K562 (cell line): ENCODE measurements at regions of chr22 and their contacts with region 1.

Region 1: GRCh38 chr22:22527312-22527711 is 7.2 kb upstream of the ZNF280A start:
- DNase-seq: peak in 1 of 4 experiments; percentile 83
- ATAC-seq: peak; percentile 9
- H3K4me3 ChIP-seq: no peak overlapping the region
- H3K27ac ChIP-seq: no peak overlapping the region
- H3K4me1 ChIP-seq: peaks cover 0 to 2% of the 10 kb centered on the region in 2 experiments; a peak in 1 of 5 replicates
- H3K27me3 ChIP-seq: no peaks in the 10 kb centered on the region
- CTCF ChIP-seq: no peak
- EP300 ChIP-seq: no peak
- POLR2A ChIP-seq: no peak
- RAD21 ChIP-seq: no peak

Region 2: GRCh38 chr22:22546490-22546889 is 19.2 kb after region 1 on chr22:
- CTCF ChIA-PET with region 1: no interaction called
- POLR2A ChIA-PET with region 1: interaction called, 708 read pairs
- in situ Hi-C with region 1: no loop called
- intact Hi-C with region 1: no loop called
- DNase-seq: peak; percentile 56 to 72 (median 68)
- ATAC-seq: peak; percentile 44
- H3K4me3 ChIP-seq: no peak overlapping the region
- H3K27ac ChIP-seq: no peak overlapping the region; the same call in 2 of the 3 replicates
- H3K4me1 ChIP-seq: peaks cover 13 to 20% of the 10 kb centered on the region in 2 experiments
- H3K27me3 ChIP-seq: no peaks in the 10 kb centered on the region
- CTCF ChIP-seq: no peak
- EP300 ChIP-seq: no peak
- POLR2A ChIP-seq: no peak
- RAD21 ChIP-seq: no peak

Region 3: DNA sequence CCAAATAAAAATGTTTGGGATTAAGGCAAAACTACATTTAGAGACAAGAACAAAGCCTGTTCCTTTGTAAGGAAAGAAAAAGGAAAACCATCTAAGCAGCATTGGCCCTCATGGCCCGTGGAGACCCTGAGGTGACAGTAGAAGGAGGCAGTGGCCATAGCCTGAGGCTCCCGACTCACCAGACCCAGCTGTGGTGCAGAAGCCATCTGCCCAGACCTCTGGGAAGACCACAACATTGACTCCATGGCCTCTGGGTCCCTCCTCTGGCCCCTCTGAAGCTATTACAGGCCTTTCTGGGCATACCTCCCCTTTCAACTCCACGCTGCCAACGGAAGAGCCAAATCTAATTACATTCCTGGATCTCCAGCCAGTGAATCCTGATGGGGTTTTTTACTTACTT is 25.3 kb after region 1 on chr22:
- CTCF ChIA-PET with region 1: no interaction called
- POLR2A ChIA-PET with region 1: interaction called, 708 read pairs
- in situ Hi-C with region 1: no loop called
- intact Hi-C with region 1: no loop called
- DNase-seq: peak; percentile 84 to 87 (median 86)
- ATAC-seq: peak; percentile 21
- H3K4me3 ChIP-seq: no peak overlapping the region
- H3K27ac ChIP-seq: peak overlapping the region; percentile 2; the same call in 2 of the 3 replicates
- H3K4me1 ChIP-seq: peaks cover 52 to 63% of the 10 kb centered on the region in 2 experiments
- H3K27me3 ChIP-seq: no peaks in the 10 kb centered on the region
- CTCF ChIP-seq: no peak
- EP300 ChIP-seq: no peak
- POLR2A ChIP-seq: no peak
- RAD21 ChIP-seq: no peak

Region 4: DNA sequence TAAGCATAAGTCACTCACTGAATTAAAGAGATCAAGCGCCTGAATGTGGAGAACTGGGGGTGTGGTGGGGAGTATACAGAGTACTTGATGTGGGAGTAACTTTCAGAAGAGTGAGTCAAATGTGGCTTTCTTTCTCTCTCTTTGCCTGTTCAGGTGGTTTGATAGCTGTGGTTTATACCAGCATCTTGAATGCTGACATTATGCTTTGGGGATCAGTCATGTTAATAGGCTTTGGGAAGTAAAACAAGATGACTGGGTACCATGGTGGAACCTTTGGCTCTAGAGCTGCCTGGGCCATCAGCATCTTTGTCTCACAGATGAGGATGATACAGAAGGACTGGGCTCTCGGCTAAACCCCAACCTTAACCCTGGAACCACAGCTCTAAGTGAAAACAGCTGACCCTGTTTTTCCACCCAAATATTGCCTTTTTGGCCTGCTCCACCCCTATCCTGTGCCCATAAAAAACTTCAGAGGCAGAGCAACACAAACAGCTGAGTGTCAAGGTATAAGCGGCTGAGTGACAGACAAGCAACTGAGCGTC is 484.8 kb after region 1 on chr22:
- CTCF ChIA-PET with region 1: no interaction called
- POLR2A ChIA-PET with region 1: no interaction called
- in situ Hi-C with region 1: no loop called
- intact Hi-C with region 1: no loop called
- DNase-seq: peak in 2 of 4 experiments; percentile 40 to 46
- ATAC-seq: no peak
- H3K4me3 ChIP-seq: no peak overlapping the region
- H3K27ac ChIP-seq: no peak overlapping the region
- H3K4me1 ChIP-seq: peaks cover 0 to 5% of the 10 kb centered on the region in 2 experiments; a peak in 2 of 5 replicates
- H3K27me3 ChIP-seq: peaks cover 42 to 52% of the 10 kb centered on the region in 2 experiments
- CTCF ChIP-seq: no peak
- EP300 ChIP-seq: no peak
- POLR2A ChIP-seq: no peak
- RAD21 ChIP-seq: no peak